Activated T-helper 1 cell treated with anti-CD3 and anti-CD28 coated beads, Interleukin-12 subunit alpha, Interleukin-12 subunit beta, Interleukin-2, Interleukin-4 antibody, amounts not matched to agents 30 ng/mL and 10 ng/mL and 1 ng/mL, durations not matched to agents 14 hours and 24 hours and 36 hours (primary cell): ENCODE measurements at regions of chr3 and their contacts with region 1.

Region 1: DNA sequence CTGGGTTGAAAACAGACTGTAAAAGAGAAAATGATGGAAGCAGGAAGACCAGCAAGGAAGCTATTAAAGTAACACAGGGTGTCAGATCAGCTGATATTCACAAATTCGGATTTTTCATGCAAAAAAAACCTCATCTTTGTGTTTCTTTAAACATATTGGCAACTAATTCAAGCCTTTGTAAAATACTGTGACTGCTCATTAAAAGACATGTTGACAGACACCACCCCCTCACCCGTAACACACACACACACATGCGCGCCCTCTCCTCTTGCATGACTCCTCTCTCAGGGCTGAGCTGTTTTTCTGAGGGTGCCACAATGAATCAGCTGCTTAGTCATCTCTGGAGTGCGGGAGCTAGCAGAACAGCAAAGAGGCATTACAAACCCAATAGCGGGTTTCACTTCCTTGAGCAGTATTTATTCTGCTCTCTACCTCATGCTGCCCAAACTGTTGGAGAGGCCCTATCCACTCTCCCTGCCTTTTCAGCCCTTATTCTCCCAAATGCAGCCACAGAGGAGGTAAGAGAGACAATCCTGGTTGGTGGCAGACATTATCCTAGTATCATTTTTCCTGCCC is 35.8 kb upstream of the CCDC80 start:
- DNase-seq: peak; percentile 89
- H3K4me3 Mint-ChIP-seq: peak overlapping the region; percentile 64
- H3K27ac Mint-ChIP-seq: peak overlapping the region; percentile 87
- H3K4me1 Mint-ChIP-seq: peaks cover 70% of the 10 kb centered on the region
- H3K27me3 Mint-ChIP-seq: no peaks in the 10 kb centered on the region

Region 2: DNA sequence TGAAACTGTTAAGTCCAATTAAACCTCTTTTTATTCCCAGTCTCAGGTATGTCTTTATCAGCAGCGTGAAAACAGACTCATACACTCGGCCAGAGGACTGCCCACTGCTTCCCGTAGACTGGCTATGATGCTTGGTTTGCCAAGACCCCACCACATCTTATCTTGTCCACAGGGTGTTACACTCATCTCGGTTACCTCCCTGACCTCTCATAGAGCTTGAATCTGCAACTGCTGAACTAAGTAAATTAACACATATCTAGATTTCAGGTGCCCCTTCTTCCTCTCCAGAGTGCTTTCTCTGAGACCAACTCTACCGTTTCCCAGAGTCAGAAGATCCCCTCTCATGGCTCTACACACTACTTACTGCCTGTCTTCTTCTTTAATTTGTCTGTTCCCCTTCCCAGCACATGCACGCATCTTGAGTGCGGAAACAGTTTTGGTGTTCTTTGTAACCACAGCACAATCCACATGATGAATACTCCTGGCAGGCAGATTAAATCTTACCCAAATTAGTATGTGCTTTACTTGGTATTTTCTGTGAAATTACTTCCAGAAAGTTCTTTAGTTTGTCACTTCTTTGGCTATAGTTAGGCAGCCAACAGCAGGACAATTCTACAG is 294.1 kb before region 1 on chr3:
- intact Hi-C with region 1: loop called (anchors 10 kb)
- DNase-seq: no peak
- H3K4me3 Mint-ChIP-seq: no peak overlapping the region
- H3K27ac Mint-ChIP-seq: peak overlapping the region; percentile 59
- H3K4me1 Mint-ChIP-seq: peaks cover 43% of the 10 kb centered on the region
- H3K27me3 Mint-ChIP-seq: no peaks in the 10 kb centered on the region

Region 3: DNA sequence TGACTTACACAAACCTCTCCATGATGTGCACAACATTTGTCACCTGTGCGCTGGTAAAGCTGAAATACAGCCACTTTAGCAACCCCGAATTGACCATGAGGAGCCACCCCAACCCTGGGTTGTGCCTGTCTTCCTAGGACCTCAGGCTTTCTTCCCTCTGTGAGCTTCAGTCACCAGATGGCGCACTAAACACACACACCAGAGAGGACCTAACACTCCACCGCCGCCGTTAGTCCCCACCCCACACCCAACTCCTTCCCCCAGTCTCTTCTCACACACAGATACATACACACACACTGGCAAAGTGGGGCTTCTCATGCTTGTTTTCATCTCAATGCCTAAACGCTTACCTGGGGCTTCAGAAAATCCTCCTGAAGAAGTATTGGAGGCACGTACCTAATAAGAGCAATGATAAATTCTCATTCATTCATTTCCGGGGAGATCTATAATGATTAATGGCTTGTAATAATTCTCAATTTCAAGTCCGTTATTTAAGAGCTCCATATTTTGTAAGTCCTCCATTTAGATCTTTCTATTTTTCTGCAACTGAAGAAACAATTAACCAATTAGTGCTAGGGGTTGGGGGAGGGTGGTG is 33.7 kb before region 1 on chr3:
- intact Hi-C with region 1: loop called (anchors 1 kb)
- DNase-seq: peak; percentile 74
- H3K4me3 Mint-ChIP-seq: peak overlapping the region; percentile 68
- H3K27ac Mint-ChIP-seq: peak overlapping the region; percentile 61
- H3K4me1 Mint-ChIP-seq: peaks cover 27% of the 10 kb centered on the region
- H3K27me3 Mint-ChIP-seq: peaks cover 5% of the 10 kb centered on the region

Region 4: GRCh38 chr3:112688819-112689218 is 12.1 kb after region 1 on chr3:
- intact Hi-C with region 1: no loop called
- DNase-seq: no peak
- H3K4me3 Mint-ChIP-seq: no peak overlapping the region
- H3K27ac Mint-ChIP-seq: no peak overlapping the region
- H3K4me1 Mint-ChIP-seq: peaks cover 17% of the 10 kb centered on the region
- H3K27me3 Mint-ChIP-seq: peaks cover 11% of the 10 kb centered on the region

Region 5: GRCh38 chr3:112973325-112974177 is 296.8 kb after region 1 on chr3:
- intact Hi-C with region 1: loop called (anchors 1 kb)
- DNase-seq: peak; percentile 54
- H3K4me3 Mint-ChIP-seq: peak overlapping the region; percentile 89
- H3K27ac Mint-ChIP-seq: peak overlapping the region; percentile 87
- H3K4me1 Mint-ChIP-seq: peaks cover 83% of the 10 kb centered on the region
- H3K27me3 Mint-ChIP-seq: no peaks in the 10 kb centered on the region

Region 6: DNA sequence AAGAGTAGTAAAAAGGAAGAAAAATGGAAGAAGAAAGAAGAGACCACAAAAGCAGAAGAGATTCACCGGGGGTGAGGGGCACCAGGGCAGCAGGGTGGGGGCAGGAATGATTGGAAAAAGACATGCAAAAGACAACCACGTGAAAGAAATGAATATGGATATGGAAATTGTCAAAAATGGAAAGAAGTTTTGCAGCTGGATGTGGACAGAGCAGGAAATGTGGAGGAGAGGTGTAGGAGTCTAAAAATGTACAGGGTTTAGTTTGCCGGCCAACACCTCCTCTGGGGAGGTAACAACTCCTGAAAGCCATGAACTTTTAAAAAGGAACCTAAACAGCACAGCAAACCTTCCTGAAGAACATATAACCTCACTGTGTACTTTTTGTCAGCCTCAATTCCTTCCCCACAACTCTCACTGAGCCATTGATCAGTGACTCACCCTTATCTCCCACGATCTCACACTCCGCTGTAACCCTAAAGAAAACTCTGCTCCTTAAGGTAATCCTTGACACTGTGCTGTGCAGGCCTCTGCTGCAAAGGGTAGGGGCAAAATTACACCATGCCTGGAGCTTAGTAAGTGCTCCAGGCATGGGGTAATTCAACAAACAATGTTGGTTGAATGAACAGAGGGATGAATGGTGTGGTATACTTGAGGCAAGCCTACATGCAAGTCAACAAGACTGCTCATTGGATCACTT is 434.4 kb after region 1 on chr3:
- intact Hi-C with region 1: loop called (anchors 2 kb)
- DNase-seq: peak; percentile 5
- H3K4me3 Mint-ChIP-seq: no peak overlapping the region
- H3K27ac Mint-ChIP-seq: peak overlapping the region; percentile 21
- H3K4me1 Mint-ChIP-seq: peaks cover 33% of the 10 kb centered on the region
- H3K27me3 Mint-ChIP-seq: no peaks in the 10 kb centered on the region